K562 (cell line): ENCODE measurements at regions of chr21 and their contacts with region 1.

Region 1: GRCh38 chr21:36966066-36966820 is at the start of gene HLCS:
- DNase-seq: peak; percentile 90 to 94 (median 94)
- ATAC-seq: peak; percentile 81
- H3K4me3 ChIP-seq: peak within 1 kb of the TSS; percentile 89
- H3K27ac ChIP-seq: peak within 1 kb of the TSS; percentile 96
- H3K4me1 ChIP-seq: peaks cover 27 to 33% of the 10 kb centered on the region in 2 experiments
- H3K27me3 ChIP-seq: no peaks in the 10 kb centered on the region
- CTCF ChIP-seq: peak in 2 of 3 experiments; percentile 45 to 54; a peak in 3 of 6 replicates
- EP300 ChIP-seq: no peak
- POLR2A ChIP-seq: peak; percentile 69
- RAD21 ChIP-seq: no peak
- polyA plus RNA-seq, gene HLCS: 3.0 to 3.6 TPM

Region 2: GRCh38 chr21:36934864-36935420 is 31.3 kb before region 1 on chr21:
- CTCF ChIA-PET with region 1: no interaction called
- POLR2A ChIA-PET with region 1: interaction called, 4 read pairs
- in situ Hi-C with region 1: no loop called
- intact Hi-C with region 1: loop called (anchors 1 kb)
- DNase-seq: no peak
- ATAC-seq: no peak
- H3K4me3 ChIP-seq: no peak overlapping the region
- H3K27ac ChIP-seq: no peak overlapping the region
- H3K4me1 ChIP-seq: no peaks in the 10 kb centered on the region; a peak in 1 of 5 replicates
- H3K27me3 ChIP-seq: no peaks in the 10 kb centered on the region
- CTCF ChIP-seq: no peak
- EP300 ChIP-seq: no peak
- POLR2A ChIP-seq: no peak
- RAD21 ChIP-seq: no peak

Region 3: DNA sequence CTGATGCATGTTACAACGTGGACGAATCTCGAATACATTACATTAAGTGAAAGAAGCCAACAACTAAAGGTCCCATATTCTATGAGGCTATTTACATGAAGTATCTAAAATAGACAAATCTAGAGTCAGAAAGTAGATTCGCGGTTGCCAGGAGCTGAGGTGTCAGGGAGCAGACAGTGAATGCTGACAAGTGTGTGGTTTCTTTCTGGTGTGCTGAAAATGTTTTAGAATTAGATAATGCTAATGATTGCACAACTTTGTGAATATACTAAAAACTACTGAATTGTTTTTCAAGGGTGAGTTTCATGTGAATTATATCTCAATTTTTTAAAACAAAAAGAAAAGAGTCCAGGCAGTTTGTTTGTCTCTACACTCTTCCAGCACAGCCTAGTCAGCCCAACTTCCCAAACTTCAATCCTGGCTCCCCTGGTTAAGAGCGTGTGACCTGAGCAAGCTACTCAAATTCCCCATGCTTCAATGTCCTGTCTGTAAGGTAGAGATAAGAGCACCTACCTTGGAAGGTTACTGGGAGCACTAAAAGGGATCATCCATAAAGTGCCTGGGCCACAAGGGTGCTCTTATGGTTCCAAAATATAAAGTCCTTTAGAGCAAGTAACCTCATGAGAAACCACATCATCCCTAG is 20.6 kb before region 1 on chr21:
- CTCF ChIA-PET with region 1: no interaction called
- POLR2A ChIA-PET with region 1: interaction called, 10 read pairs
- in situ Hi-C with region 1: no loop called
- intact Hi-C with region 1: no loop called
- DNase-seq: peak; percentile 33 to 60 (median 52)
- ATAC-seq: peak; percentile 86
- H3K4me3 ChIP-seq: no peak overlapping the region
- H3K27ac ChIP-seq: no peak overlapping the region
- H3K4me1 ChIP-seq: peaks cover 0 to 9% of the 10 kb centered on the region in 2 experiments; a peak in 3 of 5 replicates
- H3K27me3 ChIP-seq: no peaks in the 10 kb centered on the region
- CTCF ChIP-seq: no peak
- EP300 ChIP-seq: no peak
- POLR2A ChIP-seq: no peak
- RAD21 ChIP-seq: no peak

Region 4: DNA sequence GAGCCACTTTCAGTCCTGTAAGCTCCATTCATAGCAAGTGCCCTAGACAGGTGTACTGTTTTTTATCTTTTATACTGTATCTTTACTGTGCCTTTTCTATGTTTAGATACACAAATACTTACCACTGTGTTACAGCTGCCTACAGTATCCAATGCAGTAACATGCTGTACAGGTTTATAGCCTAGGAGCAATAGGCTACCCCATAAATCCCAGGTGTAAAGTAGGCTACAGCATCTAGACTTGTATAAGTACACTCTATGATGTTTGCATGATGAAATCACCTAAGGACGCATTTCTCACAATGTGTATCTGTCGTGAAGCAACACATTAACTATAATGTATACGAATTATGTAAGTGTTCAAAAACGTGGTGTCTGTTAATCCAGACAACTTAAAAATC is 10.5 kb before region 1 on chr21:
- CTCF ChIA-PET with region 1: no interaction called
- POLR2A ChIA-PET with region 1: interaction called, 17 read pairs
- in situ Hi-C with region 1: no loop called
- intact Hi-C with region 1: no loop called
- DNase-seq: no peak
- ATAC-seq: no peak
- H3K4me3 ChIP-seq: no peak overlapping the region
- H3K27ac ChIP-seq: no peak overlapping the region
- H3K4me1 ChIP-seq: peaks cover 0 to 8% of the 10 kb centered on the region in 2 experiments; a peak in 2 of 5 replicates
- H3K27me3 ChIP-seq: no peaks in the 10 kb centered on the region
- CTCF ChIP-seq: no peak
- EP300 ChIP-seq: no peak
- POLR2A ChIP-seq: no peak
- RAD21 ChIP-seq: no peak

Region 5: DNA sequence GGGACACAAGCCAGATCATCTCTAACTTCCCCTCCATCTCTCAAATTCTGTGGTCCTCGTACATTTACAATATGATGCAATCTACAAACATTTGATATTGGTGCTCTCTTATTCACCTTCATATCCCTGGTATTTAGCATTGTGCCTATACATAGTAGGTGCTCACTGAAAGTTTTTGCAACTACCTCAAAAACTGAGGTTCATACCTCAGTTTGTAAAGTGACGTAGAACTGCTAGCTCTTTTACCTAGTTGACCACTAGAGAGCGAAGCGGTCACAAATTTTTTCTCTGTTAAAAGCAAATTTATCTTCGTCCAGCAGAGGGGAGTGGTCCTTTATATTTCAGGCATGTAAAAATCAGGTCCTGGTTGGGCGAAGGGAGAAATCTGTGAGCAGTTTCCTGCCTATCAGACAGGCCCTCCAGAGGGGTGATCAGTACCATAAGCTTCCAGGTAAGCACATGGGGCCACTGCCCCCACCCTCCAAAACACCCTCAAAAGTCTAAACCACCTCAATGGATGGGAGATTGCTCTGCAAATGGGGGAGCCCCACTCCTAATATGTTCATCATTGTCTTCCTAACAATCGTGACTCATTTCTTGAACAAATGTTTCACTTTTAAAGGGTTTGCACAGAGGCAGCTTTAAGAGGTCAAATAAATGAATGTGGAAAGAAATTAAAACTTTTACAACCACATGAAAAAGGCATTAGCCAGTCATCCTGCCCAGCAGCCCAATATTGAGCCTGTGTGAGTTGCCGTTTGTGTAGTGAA is 10.8 kb after region 1 on chr21:
- CTCF ChIA-PET with region 1: interaction called, 4 read pairs
- POLR2A ChIA-PET with region 1: interaction called, 14 read pairs
- in situ Hi-C with region 1: no loop called
- intact Hi-C with region 1: no loop called
- DNase-seq: peak; percentile 61 to 87 (median 66)
- ATAC-seq: peak; percentile 83
- H3K4me3 ChIP-seq: no peak overlapping the region
- H3K27ac ChIP-seq: no peak overlapping the region
- H3K4me1 ChIP-seq: peaks cover 16 to 20% of the 10 kb centered on the region in 2 experiments
- H3K27me3 ChIP-seq: no peaks in the 10 kb centered on the region
- CTCF ChIP-seq: peak; percentile 98 to 100 (median 99)
- EP300 ChIP-seq: peak; percentile 42; the same call in 1 of the 2 replicates
- POLR2A ChIP-seq: no peak
- RAD21 ChIP-seq: peak; percentile 91 to 96

Region 6: GRCh38 chr21:37060296-37060695 is 94.1 kb after region 1 on chr21:
- CTCF ChIA-PET with region 1: no interaction called
- POLR2A ChIA-PET with region 1: no interaction called
- in situ Hi-C with region 1: no loop called
- intact Hi-C with region 1: no loop called
- DNase-seq: peak in 1 of 4 experiments; percentile 52
- ATAC-seq: peak; percentile 58
- H3K4me3 ChIP-seq: no peak overlapping the region
- H3K27ac ChIP-seq: no peak overlapping the region
- H3K4me1 ChIP-seq: no peaks in the 10 kb centered on the region; a peak in 1 of 5 replicates
- H3K27me3 ChIP-seq: no peaks in the 10 kb centered on the region
- CTCF ChIP-seq: no peak; a peak in 1 of 6 replicates
- EP300 ChIP-seq: no peak
- POLR2A ChIP-seq: no peak
- RAD21 ChIP-seq: no peak

Region 7: DNA sequence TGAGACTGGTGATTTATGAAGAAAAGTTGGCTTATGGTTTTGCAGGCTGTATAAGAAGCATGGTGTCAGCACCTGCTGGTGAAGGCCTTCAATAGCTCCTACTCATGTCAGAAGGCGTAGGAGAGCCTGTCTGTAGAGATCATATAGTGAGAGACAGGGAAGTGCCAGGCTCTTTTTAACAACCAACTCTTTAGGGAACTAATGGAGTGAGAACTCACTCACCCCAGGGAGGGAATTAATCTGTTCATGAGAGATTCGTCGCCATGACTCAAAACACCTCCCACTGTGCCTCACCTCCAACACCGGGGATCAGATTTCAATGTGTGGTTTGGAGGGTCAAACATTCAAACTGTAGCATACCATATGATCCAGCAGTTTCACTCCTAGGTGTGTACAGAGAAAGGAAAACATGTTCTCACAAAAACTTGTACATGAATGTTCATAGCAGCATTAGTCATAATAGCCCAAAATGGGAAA is 179.4 kb after region 1 on chr21:
- CTCF ChIA-PET with region 1: no interaction called
- POLR2A ChIA-PET with region 1: no interaction called
- in situ Hi-C with region 1: no loop called
- intact Hi-C with region 1: no loop called
- DNase-seq: peak in 1 of 4 experiments; percentile 37
- ATAC-seq: peak; percentile 85
- H3K4me3 ChIP-seq: no peak overlapping the region
- H3K27ac ChIP-seq: 0 out of 3 replicates have a peak overlapping the region, but pooled peaks have one; percentile 11
- H3K4me1 ChIP-seq: no peaks in the 10 kb centered on the region
- H3K27me3 ChIP-seq: no peaks in the 10 kb centered on the region
- CTCF ChIP-seq: peak in 2 of 3 experiments; percentile 6 to 14; a peak in 2 of 6 replicates
- EP300 ChIP-seq: no peak
- POLR2A ChIP-seq: no peak
- RAD21 ChIP-seq: peak in 1 of 2 experiments; percentile 32; a peak in 1 of 4 replicates

Region 8: GRCh38 chr21:37267269-37268184 is 301.3 kb after region 1 on chr21 and contains the start of gene VPS26C:
- CTCF ChIA-PET with region 1: no interaction called
- POLR2A ChIA-PET with region 1: no interaction called
- in situ Hi-C with region 1: no loop called
- intact Hi-C with region 1: loop called (anchors 5 kb)
- DNase-seq: peak; percentile 93 to 100 (median 95)
- ATAC-seq: peak; percentile 91
- H3K4me3 ChIP-seq: peak within 1 kb of the TSS; percentile 71
- H3K27ac ChIP-seq: peak within 1 kb of the TSS; percentile 99
- H3K4me1 ChIP-seq: peaks cover 26 to 31% of the 10 kb centered on the region in 2 experiments; a peak in 4 of 5 replicates
- H3K27me3 ChIP-seq: no peaks in the 10 kb centered on the region
- CTCF ChIP-seq: 0 out of 6 replicates have a peak, but pooled peaks of 1 of the 3 experiments have one; percentile 8
- EP300 ChIP-seq: peak; percentile 23
- POLR2A ChIP-seq: peak; percentile 99
- RAD21 ChIP-seq: peak in 1 of 2 experiments; percentile 29; a peak in 2 of 4 replicates
- polyA plus RNA-seq, gene VPS26C: 32.8 to 42.2 TPM